Activated naive CD4-positive, alpha-beta T cell treated with anti-CD3 and anti-CD28 coated beads for 36 hours (primary cell): ENCODE measurements at regions of chr2 and their contacts with region 1.

Region 1: DNA sequence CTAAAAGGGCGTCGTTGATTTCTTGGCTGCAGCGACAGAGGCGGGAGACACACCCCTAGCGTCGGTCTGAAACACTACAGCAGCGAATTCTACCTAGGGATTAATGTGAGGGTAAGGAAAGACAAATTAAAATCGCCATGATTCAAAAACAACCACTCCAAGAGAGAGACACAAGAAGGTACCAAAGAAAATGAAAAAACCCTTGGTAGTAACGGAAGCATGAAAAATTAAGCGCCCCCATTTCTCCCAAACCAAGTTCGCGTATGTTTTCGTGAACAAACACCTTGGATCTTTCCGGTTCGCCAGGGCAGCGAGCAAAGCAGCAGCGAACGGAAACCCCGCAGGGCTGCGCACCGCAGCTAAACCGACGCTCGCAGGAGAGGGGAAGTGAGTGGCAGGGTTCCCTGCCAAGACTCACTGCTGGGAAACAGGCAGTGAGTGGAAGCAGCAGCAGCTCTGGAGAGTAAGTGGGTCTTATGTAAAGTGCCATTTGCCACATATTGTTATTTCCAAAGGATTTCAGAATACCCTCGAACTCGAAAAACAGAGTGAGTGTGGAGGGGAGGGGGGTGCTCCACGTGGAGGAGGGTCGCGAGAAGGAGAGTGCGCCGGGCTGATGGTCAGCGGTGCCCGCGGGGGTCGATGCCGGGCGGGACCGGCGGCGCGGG is 1.0 kb downstream of the PPP3R1 start:
- DNase-seq: peak; percentile 90
- H3K4me3 Mint-ChIP-seq: peak overlapping the region; percentile 97
- H3K27ac Mint-ChIP-seq: peak overlapping the region; percentile 94
- H3K4me1 Mint-ChIP-seq: peaks cover 38% of the 10 kb centered on the region
- H3K27me3 Mint-ChIP-seq: no peaks in the 10 kb centered on the region

Region 2: GRCh38 chr2:67974559-67975430 is 276.5 kb before region 1 on chr2:
- CTCF ChIA-PET with region 1: no interaction called
- intact Hi-C with region 1: no loop called
- DNase-seq: no peak
- H3K4me3 Mint-ChIP-seq: no peak overlapping the region
- H3K27ac Mint-ChIP-seq: no peak overlapping the region
- H3K4me1 Mint-ChIP-seq: no peaks in the 10 kb centered on the region
- H3K27me3 Mint-ChIP-seq: peaks cover 16% of the 10 kb centered on the region

Region 3: DNA sequence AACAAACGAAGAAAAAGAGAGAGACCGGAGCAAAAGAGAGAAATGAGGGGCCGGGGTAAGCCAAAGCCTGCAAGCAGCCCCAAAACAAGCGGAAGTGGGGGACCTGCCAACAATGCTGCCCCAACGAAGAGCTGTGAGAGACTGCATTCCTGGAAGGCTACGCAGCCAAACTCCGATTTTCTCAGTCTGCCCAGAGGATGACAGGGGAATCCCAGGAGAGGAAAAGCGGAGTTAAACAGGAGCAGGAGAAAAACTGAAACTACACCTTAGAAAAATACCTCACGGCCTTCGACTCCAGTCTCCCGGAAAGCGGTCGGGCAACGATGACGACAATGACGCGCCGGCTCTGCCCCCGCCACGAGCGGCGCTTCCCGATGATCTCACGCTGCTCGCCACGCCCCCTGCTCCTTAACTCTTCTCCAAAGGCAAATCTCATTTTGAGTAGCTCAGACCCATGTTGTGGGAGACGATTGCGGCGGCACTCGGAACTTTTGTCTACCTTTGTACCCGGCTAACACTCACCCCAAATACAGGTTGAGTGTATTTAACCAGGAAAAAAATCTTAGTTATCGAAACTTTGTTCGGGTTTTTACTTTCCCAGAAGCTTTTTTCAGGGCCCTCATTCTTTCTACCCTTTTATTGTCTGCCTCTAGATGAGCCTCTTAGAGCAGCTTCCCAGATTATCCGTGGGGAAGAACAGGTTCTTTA is 188.5 kb before region 1 on chr2 and contains the start of gene C1D:
- CTCF ChIA-PET with region 1: no interaction called
- intact Hi-C with region 1: loop called (anchors 1 kb)
- DNase-seq: peak; percentile 96
- H3K4me3 Mint-ChIP-seq: peak within 1 kb of the TSS; percentile 89
- H3K27ac Mint-ChIP-seq: peak within 1 kb of the TSS; percentile 93
- H3K4me1 Mint-ChIP-seq: peaks cover 33% of the 10 kb centered on the region
- H3K27me3 Mint-ChIP-seq: no peaks in the 10 kb centered on the region
- total RNA-seq, gene C1D: 19.0 to 21.4 TPM

Region 4: GRCh38 chr2:68196120-68196716 is 55.1 kb before region 1 on chr2:
- CTCF ChIA-PET with region 1: interaction called, 11 read pairs
- intact Hi-C with region 1: loop called (anchors 1 kb)
- DNase-seq: peak; percentile 52
- H3K4me3 Mint-ChIP-seq: no peak overlapping the region
- H3K27ac Mint-ChIP-seq: no peak overlapping the region
- H3K4me1 Mint-ChIP-seq: peaks cover 51% of the 10 kb centered on the region
- H3K27me3 Mint-ChIP-seq: no peaks in the 10 kb centered on the region

Region 5: DNA sequence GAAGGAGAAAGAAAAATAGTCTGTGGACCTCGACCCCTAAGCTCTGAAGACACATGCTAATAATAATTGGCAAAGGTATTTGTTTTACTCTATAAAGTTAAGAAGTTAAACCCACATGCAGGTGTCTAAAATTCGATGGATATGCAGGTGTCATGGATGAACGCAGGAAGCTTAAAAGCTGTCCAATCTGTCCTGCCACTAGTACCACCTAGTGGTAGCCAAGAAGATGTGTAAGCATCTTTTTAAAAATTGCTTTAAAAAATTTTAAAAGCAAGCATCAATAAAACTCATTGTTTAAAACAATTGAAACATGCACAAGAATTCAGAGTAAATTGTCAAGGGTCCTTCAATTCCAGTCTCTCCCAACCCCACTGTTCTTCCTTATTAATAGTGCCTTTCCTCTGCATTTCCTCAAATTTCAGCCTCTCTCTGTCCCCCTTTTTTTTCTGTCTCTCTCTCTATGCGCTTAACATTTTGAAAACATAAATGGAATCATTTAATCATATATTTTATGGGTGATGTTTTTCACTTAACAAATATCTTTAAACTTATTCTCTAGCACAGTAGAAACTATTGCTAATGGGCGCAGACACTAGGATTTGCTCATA is 31.6 kb after region 1 on chr2:
- CTCF ChIA-PET with region 1: interaction called, 3 read pairs
- intact Hi-C with region 1: loop called (anchors 2 kb)
- DNase-seq: peak; percentile 18
- H3K4me3 Mint-ChIP-seq: no peak overlapping the region
- H3K27ac Mint-ChIP-seq: no peak overlapping the region
- H3K4me1 Mint-ChIP-seq: no peaks in the 10 kb centered on the region
- H3K27me3 Mint-ChIP-seq: peaks cover 2% of the 10 kb centered on the region

Region 6: DNA sequence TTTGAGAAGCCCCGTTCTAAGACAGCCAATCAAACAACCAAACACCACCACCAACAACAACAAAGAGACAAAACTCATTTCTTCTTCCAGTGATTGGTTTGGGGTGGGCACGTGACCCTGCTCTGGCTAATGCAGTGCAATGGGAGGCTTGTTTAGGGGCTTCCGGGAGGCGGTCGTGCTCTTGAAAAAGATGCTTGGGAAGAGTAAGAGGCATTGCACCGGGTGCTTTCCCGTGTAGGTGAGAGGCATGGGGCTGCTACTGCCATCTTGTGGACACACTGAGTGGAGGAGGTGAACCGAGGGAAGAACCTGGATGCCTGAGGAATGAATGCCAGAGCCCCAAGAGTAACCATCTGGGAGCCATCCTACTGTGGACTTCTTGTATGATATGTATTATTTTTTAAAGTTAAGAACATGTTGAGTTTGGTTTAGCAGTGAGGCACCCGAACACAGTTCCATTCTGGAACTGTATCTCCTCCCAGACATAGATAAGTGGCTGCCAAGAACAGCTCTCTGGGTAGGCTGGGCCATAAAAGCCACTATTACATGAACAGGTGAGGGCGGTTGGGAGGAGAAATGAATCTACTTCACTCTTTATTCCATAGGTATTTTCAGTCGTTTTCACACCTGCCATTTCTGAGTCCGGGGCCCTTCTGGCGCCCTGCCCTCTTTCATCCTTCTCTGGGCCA is 464.2 kb after region 1 on chr2:
- CTCF ChIA-PET with region 1: no interaction called
- intact Hi-C with region 1: loop called (anchors 5 kb)
- DNase-seq: peak; percentile 72
- H3K4me3 Mint-ChIP-seq: no peak overlapping the region
- H3K27ac Mint-ChIP-seq: peak overlapping the region; percentile 83
- H3K4me1 Mint-ChIP-seq: peaks cover 73% of the 10 kb centered on the region
- H3K27me3 Mint-ChIP-seq: no peaks in the 10 kb centered on the region

Region 7: DNA sequence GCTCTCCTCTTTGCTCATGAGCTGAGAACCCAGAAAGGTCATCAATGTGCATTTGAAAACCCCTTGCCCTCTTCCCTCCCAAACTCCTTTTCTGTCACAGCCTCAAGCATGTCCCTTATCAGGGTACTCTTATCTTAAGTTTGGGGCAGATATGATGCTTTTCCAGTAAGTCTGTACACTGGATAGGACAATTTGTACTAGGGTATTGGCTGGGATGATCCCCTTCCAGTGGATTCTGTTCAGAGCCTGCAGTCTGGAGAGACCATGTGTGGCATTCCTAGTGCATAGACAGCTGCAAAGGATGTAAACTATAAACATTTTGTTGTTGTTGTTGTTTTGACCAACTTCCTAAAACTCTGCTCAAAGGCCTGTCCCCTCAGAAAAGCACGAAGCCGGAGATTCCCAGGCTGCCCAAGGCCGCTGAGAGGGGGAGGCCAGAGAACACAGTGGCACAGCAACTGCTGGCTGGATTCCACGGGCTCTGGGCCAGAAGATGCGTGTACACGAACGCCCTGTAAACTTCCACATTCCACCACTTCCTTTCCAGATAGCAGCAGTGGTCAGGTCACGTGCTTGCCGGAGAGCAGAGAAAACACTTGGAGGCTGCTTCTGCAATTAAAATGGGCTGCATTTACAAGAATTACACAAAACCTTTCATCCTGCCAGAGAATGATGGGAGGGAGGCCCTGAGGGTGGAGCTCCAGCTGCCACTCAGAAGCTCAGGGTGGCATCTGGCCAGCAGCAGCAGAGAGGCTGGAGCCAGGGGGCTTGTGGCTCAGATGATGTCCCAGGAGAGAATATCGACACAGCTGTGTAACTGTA is 577.8 kb after region 1 on chr2:
- CTCF ChIA-PET with region 1: no interaction called
- intact Hi-C with region 1: loop called (anchors 5 kb)
- DNase-seq: peak; percentile 85
- H3K4me3 Mint-ChIP-seq: peak overlapping the region; percentile 22
- H3K27ac Mint-ChIP-seq: peak overlapping the region; percentile 77
- H3K4me1 Mint-ChIP-seq: peaks cover 60% of the 10 kb centered on the region
- H3K27me3 Mint-ChIP-seq: no peaks in the 10 kb centered on the region